PC-9 (cell line): ENCODE measurements at regions of chr5 and their contacts with region 1.

Region 1: DNA sequence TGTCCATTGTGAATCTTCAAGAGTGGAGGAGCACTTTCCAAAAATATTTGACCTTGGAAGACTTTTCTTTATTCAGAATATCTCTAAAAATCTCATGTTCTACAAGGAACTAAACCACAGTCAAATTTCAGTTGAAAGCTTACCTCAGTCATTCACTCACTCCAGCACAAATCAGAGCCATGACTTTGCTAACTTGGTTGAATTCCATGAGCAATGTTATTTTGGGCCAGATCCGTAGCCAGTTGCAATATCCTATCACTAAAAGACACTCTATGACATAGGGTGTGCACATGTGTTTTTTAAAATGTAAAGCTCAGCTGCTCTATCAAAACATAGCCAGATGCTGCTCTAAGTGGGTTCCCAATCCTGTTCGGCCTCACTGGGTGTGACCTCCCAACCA is 156.1 kb upstream of the ANKRD55 start:
- DNase-seq: no peak
- H3K4me3 ChIP-seq: no peak overlapping the region
- H3K27ac ChIP-seq: no peak overlapping the region
- H3K4me1 ChIP-seq: peaks cover 8% of the 10 kb centered on the region; the same call in 1 of the 2 replicates
- H3K27me3 ChIP-seq: no peaks in the 10 kb centered on the region
- CTCF ChIP-seq: no peak

Region 2: GRCh38 chr5:56072863-56073766 is 316.1 kb before region 1 on chr5:
- CTCF ChIA-PET with region 1: no interaction called
- POLR2A ChIA-PET with region 1: interaction called, 35 read pairs
- intact Hi-C with region 1: no loop called
- DNase-seq: no peak
- H3K4me3 ChIP-seq: no peak overlapping the region
- H3K27ac ChIP-seq: no peak overlapping the region
- H3K4me1 ChIP-seq: no peaks in the 10 kb centered on the region
- H3K27me3 ChIP-seq: no peaks in the 10 kb centered on the region
- CTCF ChIP-seq: no peak